Aorta (tissue), 5 donors: ENCODE measurements at regions of chr11 and their contacts with region 1.

Region 1: GRCh38 chr11:66677599-66678375 is at the start of gene RBM4B:
- DNase-seq: peak; percentile 98 to 99
- ATAC-seq: peak; percentile 99
- H3K4me3 ChIP-seq: peak within 1 kb of the TSS; percentile 61 to 63
- H3K27ac ChIP-seq: peak within 1 kb of the TSS; percentile 78 to 95
- H3K4me1 ChIP-seq: no peaks in the 10 kb centered on the region
- H3K27me3 ChIP-seq: no peaks in the 10 kb centered on the region
- total RNA-seq, gene RBM4B: 9.2 to 16.5 TPM

Region 2: DNA sequence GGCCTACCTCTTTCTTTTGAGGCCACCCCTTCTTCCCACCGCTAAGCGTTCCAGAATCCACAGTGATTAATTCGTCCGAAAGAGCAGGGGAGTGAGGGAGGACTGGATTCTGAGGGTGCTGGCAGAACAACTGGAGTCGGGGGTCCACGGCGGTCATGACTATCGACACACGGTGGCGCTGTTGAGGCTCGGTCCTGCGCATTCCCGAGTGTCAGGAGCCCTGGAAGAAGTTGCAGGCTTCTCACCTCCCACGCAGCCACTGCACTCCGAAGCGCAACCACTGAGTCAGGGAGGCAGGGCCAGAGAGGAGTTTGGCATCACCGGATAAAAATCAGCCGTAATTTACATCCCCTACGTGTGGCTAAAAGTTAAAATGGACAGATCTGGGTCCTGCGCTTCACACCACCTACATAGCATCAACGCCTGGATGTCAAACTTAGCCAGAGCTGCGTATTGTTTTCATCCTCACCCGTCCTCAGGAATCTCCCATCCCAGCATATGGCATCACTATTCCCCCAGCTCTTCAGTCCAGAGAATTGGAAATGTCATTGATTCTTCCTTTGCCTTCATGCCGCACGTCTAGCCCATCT is 98.7 kb before region 1 on chr11:
- intact Hi-C with region 1: loop called (anchors 1 kb)
- DNase-seq: peak; percentile 87 to 96
- ATAC-seq: peak; percentile 87
- H3K4me3 ChIP-seq: no peak overlapping the region
- H3K27ac ChIP-seq: no peak overlapping the region
- H3K4me1 ChIP-seq: no peaks in the 10 kb centered on the region
- H3K27me3 ChIP-seq: no peaks in the 10 kb centered on the region